ENCODE measurements at regions of chr18 and their contacts with region 1.

Region 1: GRCh38 chr18:23259701-23260582 is 124.7 kb downstream of the CABLES1 start:
- DNase-seq: peak; percentile 73
- H3K4me3 Mint-ChIP-seq: peak overlapping the region; percentile 47
- H3K27ac Mint-ChIP-seq: peak overlapping the region; percentile 69
- H3K4me1 Mint-ChIP-seq: peaks cover 30% of the 10 kb centered on the region
- H3K27me3 Mint-ChIP-seq: no peaks in the 10 kb centered on the region
- CTCF ChIP-seq: no peak

Region 2: GRCh38 chr18:23283916-23284430 is 24.0 kb after region 1 on chr18:
- CTCF ChIA-PET with region 1: no interaction called
- intact Hi-C with region 1: loop called (anchors 2 kb)
- DNase-seq: peak; percentile 73
- H3K4me3 Mint-ChIP-seq: peak overlapping the region; percentile 3
- H3K27ac Mint-ChIP-seq: peak overlapping the region; percentile 89
- H3K4me1 Mint-ChIP-seq: peaks cover 71% of the 10 kb centered on the region
- H3K27me3 Mint-ChIP-seq: no peaks in the 10 kb centered on the region
- CTCF ChIP-seq: no peak

Region 3: DNA sequence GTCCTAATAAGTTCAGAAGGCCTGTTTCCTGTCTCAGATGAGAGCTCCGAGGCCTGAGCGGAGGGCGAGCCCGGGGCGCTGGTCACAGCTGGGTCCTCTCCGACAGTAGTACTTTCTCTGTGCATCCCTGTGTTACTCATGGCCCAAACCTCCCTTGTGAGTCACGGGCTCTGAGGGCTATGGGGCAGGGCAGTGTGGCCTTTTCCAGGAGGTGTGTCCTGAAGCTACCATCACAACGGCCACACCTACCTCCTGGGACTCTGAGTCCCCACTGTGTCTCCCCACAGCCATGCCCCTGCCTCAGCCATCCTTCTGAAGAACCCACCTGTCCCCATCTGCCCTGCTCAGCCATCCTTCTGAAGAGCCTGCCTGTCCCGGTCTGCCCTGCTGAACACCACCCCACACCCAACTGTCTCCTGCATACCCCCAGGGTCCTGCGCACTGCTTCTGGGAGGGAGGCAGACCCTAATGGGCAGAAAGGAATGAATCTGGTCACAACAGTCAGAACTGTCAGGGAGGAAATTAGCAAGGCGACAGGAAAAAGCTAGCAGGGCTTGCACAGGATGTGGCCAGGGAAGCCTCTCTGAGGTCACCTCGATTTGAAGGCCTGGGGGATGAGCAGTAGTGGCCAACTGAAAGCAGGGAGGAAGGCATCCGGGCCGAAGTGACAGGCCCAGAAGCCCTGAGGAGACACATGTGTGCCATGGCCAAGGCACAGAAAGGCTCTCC is 47.8 kb after region 1 on chr18:
- CTCF ChIA-PET with region 1: interaction called, 17 read pairs
- intact Hi-C with region 1: no loop called
- DNase-seq: no peak
- H3K4me3 Mint-ChIP-seq: no peak overlapping the region
- H3K27ac Mint-ChIP-seq: no peak overlapping the region
- H3K4me1 Mint-ChIP-seq: peaks cover 17% of the 10 kb centered on the region
- H3K27me3 Mint-ChIP-seq: no peaks in the 10 kb centered on the region
- CTCF ChIP-seq: no peak

Measured in Calu3 (cell line).